Sciatic nerve (tissue), 2 donors: ENCODE measurements at regions of chr4 and their contacts with region 1.

Region 1: GRCh38 chr4:153153339-153153871 is 50.8 kb upstream of the TRIM2 start:
- DNase-seq: peak; percentile 67
- ATAC-seq: peak; percentile 82

Region 2: GRCh38 chr4:151700566-151701316 is 1452.7 kb before region 1 on chr4:
- intact Hi-C with region 1: no loop called
- DNase-seq: no peak
- ATAC-seq: no peak

Region 3: GRCh38 chr4:153211986-153212729 is 58.8 kb after region 1 on chr4:
- intact Hi-C with region 1: loop called (anchors 10 kb)
- DNase-seq: no peak
- ATAC-seq: peak; percentile 40